ENCODE measurements at regions of chr19 and their contacts with region 1.

Region 1: DNA sequence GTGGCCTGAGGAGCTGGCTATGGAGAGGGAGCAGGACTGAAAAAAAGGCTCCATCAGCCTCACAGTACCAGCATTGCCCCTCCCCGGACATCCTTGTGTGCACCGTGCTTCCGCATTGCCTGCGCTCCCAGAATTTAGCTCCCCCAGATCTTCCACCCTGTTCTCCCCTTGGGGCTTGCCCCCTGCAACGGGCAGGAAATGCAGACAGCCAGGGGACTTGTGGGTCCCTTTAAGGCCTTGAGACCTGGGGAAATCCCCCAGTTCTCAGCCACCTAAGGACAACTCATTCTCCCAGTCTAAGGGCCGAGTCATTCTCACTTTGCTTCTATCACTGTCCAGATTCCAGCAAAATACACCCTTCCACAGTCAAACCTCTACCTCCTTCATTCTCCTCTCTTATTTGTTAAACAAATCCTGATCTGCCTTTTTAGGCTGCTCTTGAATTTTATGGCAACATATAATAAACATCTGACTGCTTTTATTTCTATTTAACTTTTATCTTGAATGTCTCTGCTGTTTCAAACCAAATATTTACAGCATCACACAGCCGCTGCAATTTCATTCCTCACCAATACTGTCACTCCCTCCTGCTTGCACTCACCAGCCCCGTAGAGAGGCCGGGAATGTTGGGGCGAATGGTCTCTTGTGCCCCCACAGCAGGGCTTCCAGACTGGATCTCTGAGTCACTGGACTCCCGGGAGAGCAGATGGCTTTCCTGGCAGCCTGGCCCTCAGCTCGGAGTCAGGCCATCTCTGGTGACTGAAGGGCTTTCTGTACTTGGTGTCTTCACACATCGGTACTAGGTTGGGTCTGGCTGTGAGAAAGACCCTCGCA is 221.9 kb downstream of the TSHZ3 start:
- DNase-seq: peak; percentile 99
- ATAC-seq: peak; percentile 96
- H3K4me3 ChIP-seq: no peak overlapping the region
- H3K27ac ChIP-seq: peak overlapping the region; percentile 93
- H3K4me1 ChIP-seq: peaks cover 12% of the 10 kb centered on the region
- H3K27me3 ChIP-seq: no peaks in the 10 kb centered on the region
- CTCF ChIP-seq: no peak
- POLR2A ChIP-seq: peak; percentile 51; the same call in 1 of the 2 replicates
- RAD21 ChIP-seq: peak; percentile 25

Region 2: GRCh38 chr19:31073485-31074198 is 53.7 kb before region 1 on chr19:
- CTCF ChIA-PET with region 1: no interaction called
- POLR2A ChIA-PET with region 1: no interaction called
- dilution Hi-C with region 1: no loop called
- in situ Hi-C with region 1: no loop called
- intact Hi-C with region 1: no loop called
- DNase-seq: no peak
- ATAC-seq: no peak
- H3K4me3 ChIP-seq: no peak overlapping the region
- H3K27ac ChIP-seq: no peak overlapping the region
- H3K4me1 ChIP-seq: no peaks in the 10 kb centered on the region; the same call in 1 of the 2 replicates
- H3K27me3 ChIP-seq: peaks cover 28% of the 10 kb centered on the region
- CTCF ChIP-seq: no peak
- POLR2A ChIP-seq: no peak
- RAD21 ChIP-seq: no peak

Region 3: DNA sequence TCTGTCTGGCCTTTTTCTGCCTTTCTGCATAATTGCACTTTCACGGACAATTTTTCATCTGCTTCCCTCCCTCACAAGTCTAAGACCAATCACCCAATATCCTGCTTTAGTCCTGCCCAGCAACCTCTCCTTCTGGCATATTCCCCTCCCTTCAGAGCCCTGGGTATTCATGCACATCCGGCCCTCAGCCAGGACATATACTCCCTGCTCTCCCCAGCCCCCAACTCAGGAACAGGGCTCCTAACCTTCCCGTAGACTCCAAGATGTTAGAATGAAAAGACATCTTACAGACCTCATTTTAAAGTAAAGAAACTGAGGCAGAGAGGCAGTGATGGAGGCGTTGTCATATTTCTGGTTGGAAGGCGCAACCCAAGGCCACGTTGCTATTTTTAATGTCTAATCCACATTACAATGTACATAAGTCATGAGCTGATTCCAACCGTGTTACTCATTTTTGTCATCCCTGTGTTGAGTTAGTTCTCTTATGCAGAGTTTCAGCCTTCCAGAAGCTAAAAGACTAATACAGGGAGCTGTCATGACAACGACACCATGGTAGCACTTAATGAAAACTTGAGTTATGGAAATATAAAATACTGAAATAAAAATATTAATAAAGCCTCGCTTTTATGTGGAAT is 12.6 kb after region 1 on chr19:
- CTCF ChIA-PET with region 1: no interaction called
- POLR2A ChIA-PET with region 1: no interaction called
- dilution Hi-C with region 1: no loop called
- in situ Hi-C with region 1: no loop called
- intact Hi-C with region 1: no loop called
- DNase-seq: peak; percentile 90
- ATAC-seq: peak; percentile 77
- H3K4me3 ChIP-seq: no peak overlapping the region
- H3K27ac ChIP-seq: peak overlapping the region; percentile 24
- H3K4me1 ChIP-seq: peaks cover 26% of the 10 kb centered on the region
- H3K27me3 ChIP-seq: no peaks in the 10 kb centered on the region
- CTCF ChIP-seq: no peak
- POLR2A ChIP-seq: no peak
- RAD21 ChIP-seq: no peak

Region 4: GRCh38 chr19:31214086-31214485 is 86.7 kb after region 1 on chr19:
- CTCF ChIA-PET with region 1: no interaction called
- POLR2A ChIA-PET with region 1: no interaction called
- dilution Hi-C with region 1: no loop called
- in situ Hi-C with region 1: loop called (anchors 5 kb)
- intact Hi-C with region 1: no loop called
- DNase-seq: peak; percentile 100
- ATAC-seq: peak; percentile 95
- H3K4me3 ChIP-seq: no peak overlapping the region
- H3K27ac ChIP-seq: peak overlapping the region; percentile 90
- H3K4me1 ChIP-seq: peaks cover 14% of the 10 kb centered on the region
- H3K27me3 ChIP-seq: no peaks in the 10 kb centered on the region
- CTCF ChIP-seq: no peak
- POLR2A ChIP-seq: no peak; the same call in 1 of the 2 replicates
- RAD21 ChIP-seq: peak; percentile 41

Region 5: DNA sequence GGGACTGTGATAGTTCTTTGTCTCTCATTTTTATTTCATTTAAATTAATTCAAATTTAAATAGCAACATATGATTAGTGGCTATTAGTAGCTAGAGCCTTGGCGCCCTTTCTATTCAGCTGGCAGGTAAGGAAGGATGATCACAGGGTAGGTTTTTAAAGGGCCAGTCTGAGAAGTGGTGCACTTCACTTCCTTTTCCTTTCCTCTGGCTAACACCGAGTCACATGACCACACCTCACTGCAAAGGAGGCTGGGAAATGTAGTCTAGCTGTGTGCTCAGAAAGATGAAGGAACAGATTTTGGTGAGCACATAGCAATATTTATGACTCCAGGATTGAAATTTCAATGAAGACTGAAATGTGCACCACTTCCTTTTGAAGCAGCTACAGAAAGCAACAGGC is 93.2 kb after region 1 on chr19:
- CTCF ChIA-PET with region 1: interaction called, 3 read pairs
- POLR2A ChIA-PET with region 1: no interaction called
- dilution Hi-C with region 1: no loop called
- in situ Hi-C with region 1: no loop called
- intact Hi-C with region 1: loop called (anchors 1 kb)
- DNase-seq: no peak
- ATAC-seq: no peak
- H3K4me3 ChIP-seq: no peak overlapping the region
- H3K27ac ChIP-seq: no peak overlapping the region
- H3K4me1 ChIP-seq: peaks cover 25% of the 10 kb centered on the region
- H3K27me3 ChIP-seq: no peaks in the 10 kb centered on the region
- CTCF ChIP-seq: no peak
- POLR2A ChIP-seq: no peak
- RAD21 ChIP-seq: no peak

Region 6: GRCh38 chr19:31262725-31263191 is 135.4 kb after region 1 on chr19:
- CTCF ChIA-PET with region 1: no interaction called
- POLR2A ChIA-PET with region 1: no interaction called
- dilution Hi-C with region 1: no loop called
- in situ Hi-C with region 1: no loop called
- intact Hi-C with region 1: loop called (anchors 5 kb)
- DNase-seq: peak; percentile 34
- ATAC-seq: peak; percentile 64
- H3K4me3 ChIP-seq: no peak overlapping the region
- H3K27ac ChIP-seq: peak overlapping the region; percentile 4
- H3K4me1 ChIP-seq: peaks cover 11% of the 10 kb centered on the region
- H3K27me3 ChIP-seq: no peaks in the 10 kb centered on the region
- CTCF ChIP-seq: no peak
- POLR2A ChIP-seq: no peak
- RAD21 ChIP-seq: no peak

Region 7: DNA sequence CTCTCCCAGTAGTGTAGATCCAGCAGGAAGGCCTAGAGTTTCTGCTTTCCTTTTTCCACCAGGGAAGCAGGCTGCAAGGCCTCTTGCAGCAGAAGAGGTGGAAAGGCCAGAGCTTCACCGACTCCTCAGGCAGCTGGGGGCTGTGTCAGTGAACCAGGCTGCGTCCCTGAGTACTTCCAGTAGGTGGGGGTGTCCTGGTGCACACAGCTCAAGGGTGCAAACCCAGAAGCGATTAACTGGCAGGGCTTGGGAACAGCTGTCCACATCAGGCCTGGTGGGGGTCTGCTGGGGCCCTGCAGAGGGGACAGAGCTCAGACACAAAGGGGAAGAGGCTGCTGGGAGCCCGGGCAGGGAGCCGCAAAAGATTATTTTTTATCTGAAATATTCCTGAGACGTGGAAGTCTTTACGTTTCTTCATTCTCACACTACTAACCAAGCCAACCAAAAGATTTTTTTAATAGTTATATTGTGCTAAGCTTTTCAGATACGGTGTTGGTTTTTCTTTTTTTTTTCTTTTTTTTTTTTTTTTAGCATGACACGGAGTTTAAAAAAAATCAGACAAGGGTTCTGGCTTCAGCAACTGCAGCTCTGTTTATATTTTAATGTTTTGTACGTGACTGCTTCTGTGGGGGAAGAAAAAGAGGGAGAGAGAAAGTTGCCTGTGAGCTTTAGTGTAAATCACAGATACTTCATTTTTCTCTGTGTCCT is 210.9 kb after region 1 on chr19:
- CTCF ChIA-PET with region 1: interaction called, 7 read pairs
- POLR2A ChIA-PET with region 1: no interaction called
- dilution Hi-C with region 1: no loop called
- in situ Hi-C with region 1: no loop called
- intact Hi-C with region 1: loop called (anchors 2 kb)
- DNase-seq: peak; percentile 85
- ATAC-seq: peak; percentile 79
- H3K4me3 ChIP-seq: no peak overlapping the region
- H3K27ac ChIP-seq: peak overlapping the region; percentile 97
- H3K4me1 ChIP-seq: peaks cover 53% of the 10 kb centered on the region
- H3K27me3 ChIP-seq: no peaks in the 10 kb centered on the region
- CTCF ChIP-seq: peak; percentile 69
- POLR2A ChIP-seq: no peak
- RAD21 ChIP-seq: peak; percentile 62

Region 8: DNA sequence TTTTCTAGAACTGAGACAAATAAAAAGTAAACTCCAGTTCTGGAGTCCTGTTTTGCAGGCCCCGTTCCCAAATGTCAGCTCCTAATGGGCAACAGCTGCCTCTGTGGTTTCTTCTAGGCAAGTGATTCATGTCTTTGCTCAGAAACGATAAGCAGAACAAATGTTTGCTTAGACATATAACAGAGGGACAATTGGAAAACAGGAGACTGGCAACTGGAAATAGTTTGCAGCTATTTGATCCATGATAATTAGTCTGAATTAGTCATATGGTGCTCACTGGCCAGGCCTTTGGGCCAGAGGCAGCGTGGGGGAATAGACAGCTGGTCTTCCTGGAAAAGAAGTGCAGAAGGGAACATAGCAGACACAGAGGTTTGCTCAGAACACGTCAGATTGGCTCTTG is 251.1 kb after region 1 on chr19:
- CTCF ChIA-PET with region 1: no interaction called
- POLR2A ChIA-PET with region 1: no interaction called
- dilution Hi-C with region 1: no loop called
- in situ Hi-C with region 1: no loop called
- intact Hi-C with region 1: loop called (anchors 1 kb)
- DNase-seq: peak; percentile 95
- ATAC-seq: peak; percentile 92
- H3K4me3 ChIP-seq: no peak overlapping the region
- H3K27ac ChIP-seq: peak overlapping the region; percentile 35; the same call in 1 of the 2 replicates
- H3K4me1 ChIP-seq: peaks cover 2% of the 10 kb centered on the region; the same call in 1 of the 2 replicates
- H3K27me3 ChIP-seq: no peaks in the 10 kb centered on the region; the same call in 1 of the 2 replicates
- CTCF ChIP-seq: no peak
- POLR2A ChIP-seq: no peak
- RAD21 ChIP-seq: no peak

Measured in IMR-90 (cell line).